ENCODE measurements at regions of chr1 and their contacts with region 1.

Region 1: GRCh38 chr1:21324368-21325141 is 34.3 kb upstream of the ECE1 start:
- DNase-seq: peak; percentile 35
- H3K4me3 ChIP-seq: peak overlapping the region; percentile 10
- H3K27ac ChIP-seq: peak overlapping the region; percentile 12
- H3K4me1 ChIP-seq: peaks cover 38% of the 10 kb centered on the region
- CTCF ChIP-seq: no peak

Region 2: DNA sequence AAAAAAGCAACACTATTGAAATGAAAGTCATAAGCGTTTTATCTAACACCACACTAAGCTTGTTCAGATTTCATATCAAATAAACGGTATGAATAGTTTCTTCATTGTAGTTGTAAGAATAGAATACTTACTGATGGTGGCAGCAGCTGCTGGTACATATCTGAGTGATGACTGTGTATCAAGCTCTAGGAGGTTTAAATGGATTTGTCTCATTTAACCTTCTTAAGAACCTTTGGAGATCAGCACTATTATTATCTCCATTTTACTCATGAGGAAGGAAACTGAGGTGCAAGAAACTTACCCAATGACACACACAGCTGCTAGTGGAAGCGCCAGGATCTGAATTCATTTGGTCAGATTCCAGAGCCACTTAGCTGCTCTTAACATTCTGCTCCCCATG is 251.8 kb before region 1 on chr1:
- CTCF ChIA-PET with region 1: no interaction called
- POLR2A ChIA-PET with region 1: no interaction called
- intact Hi-C with region 1: no loop called
- DNase-seq: no peak
- H3K4me3 ChIP-seq: no peak overlapping the region
- H3K27ac ChIP-seq: no peak overlapping the region
- H3K4me1 ChIP-seq: peaks cover 6% of the 10 kb centered on the region
- CTCF ChIP-seq: no peak

Region 3: GRCh38 chr1:21299780-21300395 is 24.7 kb before region 1 on chr1:
- CTCF ChIA-PET with region 1: interaction called, 22 read pairs
- POLR2A ChIA-PET with region 1: interaction called, 26 read pairs
- intact Hi-C with region 1: no loop called
- DNase-seq: no peak
- H3K4me3 ChIP-seq: no peak overlapping the region
- H3K27ac ChIP-seq: no peak overlapping the region
- H3K4me1 ChIP-seq: peaks cover 38% of the 10 kb centered on the region
- CTCF ChIP-seq: no peak

Region 4: GRCh38 chr1:21355956-21356355 is 31.4 kb after region 1 on chr1:
- CTCF ChIA-PET with region 1: interaction called, 12 read pairs
- POLR2A ChIA-PET with region 1: no interaction called
- intact Hi-C with region 1: no loop called
- DNase-seq: no peak
- H3K4me3 ChIP-seq: no peak overlapping the region
- H3K27ac ChIP-seq: no peak overlapping the region
- H3K4me1 ChIP-seq: no peaks in the 10 kb centered on the region
- CTCF ChIP-seq: no peak